ENCODE measurements at regions of chr6 and their contacts with region 1.

Region 1: GRCh38 chr6:46473881-46474280 is 17.4 kb downstream of the RCAN2 start:
- H3K4me3 ChIP-seq: no peak overlapping the region
- H3K27ac ChIP-seq: no peak overlapping the region
- H3K4me1 ChIP-seq: no peaks in the 10 kb centered on the region
- CTCF ChIP-seq: no peak

Region 2: GRCh38 chr6:46338131-46338530 is 135.8 kb before region 1 on chr6:
- CTCF ChIA-PET with region 1: no interaction called
- POLR2A ChIA-PET with region 1: no interaction called
- H3K4me3 ChIP-seq: no peak overlapping the region
- H3K27ac ChIP-seq: no peak overlapping the region
- H3K4me1 ChIP-seq: no peaks in the 10 kb centered on the region
- CTCF ChIP-seq: no peak

Region 3: DNA sequence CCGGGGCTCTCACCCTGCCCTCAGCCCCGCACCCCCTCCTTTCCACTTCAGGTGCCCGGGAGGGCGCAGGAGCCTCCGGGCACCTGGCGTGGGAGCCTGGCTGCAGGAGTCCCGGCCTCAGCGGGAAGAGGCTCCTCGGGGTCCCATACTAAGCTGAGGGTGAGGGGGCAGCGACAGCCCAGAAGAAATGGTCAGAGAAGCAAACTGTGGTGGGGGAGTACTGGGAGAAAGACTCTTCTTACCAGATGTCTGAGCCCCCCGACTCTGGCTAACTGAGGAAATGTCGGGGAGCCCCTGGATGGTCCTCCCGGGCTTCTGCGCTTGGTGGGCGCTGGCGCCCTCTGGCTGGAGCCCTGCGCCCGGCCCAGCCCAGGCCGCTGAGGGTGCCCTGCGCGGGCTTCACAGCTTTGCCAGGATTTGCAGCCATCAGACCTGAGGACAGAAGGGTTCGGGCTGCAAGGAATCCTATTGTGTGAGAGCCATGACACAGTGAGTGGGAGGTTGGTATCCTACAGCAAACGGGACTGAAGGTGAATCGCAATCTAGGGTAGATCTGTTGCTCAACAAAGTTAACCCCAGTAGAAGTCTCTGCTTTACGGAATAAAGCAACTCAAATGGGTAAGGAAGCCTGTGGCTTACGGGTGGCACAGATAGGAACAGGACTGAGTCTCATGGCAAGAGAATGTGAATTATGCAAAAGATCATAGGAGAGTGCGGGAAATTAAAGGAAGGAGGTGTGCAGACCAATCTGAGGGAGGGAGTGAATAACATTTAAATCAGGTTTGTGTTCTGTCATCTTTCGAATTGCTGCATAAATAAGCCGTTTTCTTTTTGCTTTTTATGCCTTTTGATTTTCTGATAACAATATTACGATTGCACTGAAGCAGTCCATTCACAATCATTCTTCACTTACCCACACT is 18.0 kb after region 1 on chr6:
- CTCF ChIA-PET with region 1: interaction called, 16 read pairs
- POLR2A ChIA-PET with region 1: interaction called, 3 read pairs
- H3K4me3 ChIP-seq: peak overlapping the region; percentile 68
- H3K27ac ChIP-seq: no peak overlapping the region; the same call in 1 of the 2 replicates
- H3K4me1 ChIP-seq: 0 out of 2 replicates have a peak, but pooled peaks cover 3% of the 10 kb centered on the region
- CTCF ChIP-seq: peak; percentile 86

Measured in HEK293 (cell line).